Activated naive CD4-positive, alpha-beta T cell treated with anti-CD3 and anti-CD28 coated beads, Interleukin-2, amount 10 ng/mL, durations not matched to agents 7 days and 5 days (primary cell): ENCODE measurements at regions of chr6 and their contacts with region 1.

Region 1: GRCh38 chr6:43506667-43507471 is 3.3 kb downstream of the LRRC73 start:
- DNase-seq: peak; percentile 85
- H3K4me3 Mint-ChIP-seq: no peak overlapping the region
- H3K27ac Mint-ChIP-seq: no peak overlapping the region
- H3K4me1 Mint-ChIP-seq: peaks cover 13% of the 10 kb centered on the region
- H3K27me3 Mint-ChIP-seq: peaks cover 34% of the 10 kb centered on the region

Region 2: DNA sequence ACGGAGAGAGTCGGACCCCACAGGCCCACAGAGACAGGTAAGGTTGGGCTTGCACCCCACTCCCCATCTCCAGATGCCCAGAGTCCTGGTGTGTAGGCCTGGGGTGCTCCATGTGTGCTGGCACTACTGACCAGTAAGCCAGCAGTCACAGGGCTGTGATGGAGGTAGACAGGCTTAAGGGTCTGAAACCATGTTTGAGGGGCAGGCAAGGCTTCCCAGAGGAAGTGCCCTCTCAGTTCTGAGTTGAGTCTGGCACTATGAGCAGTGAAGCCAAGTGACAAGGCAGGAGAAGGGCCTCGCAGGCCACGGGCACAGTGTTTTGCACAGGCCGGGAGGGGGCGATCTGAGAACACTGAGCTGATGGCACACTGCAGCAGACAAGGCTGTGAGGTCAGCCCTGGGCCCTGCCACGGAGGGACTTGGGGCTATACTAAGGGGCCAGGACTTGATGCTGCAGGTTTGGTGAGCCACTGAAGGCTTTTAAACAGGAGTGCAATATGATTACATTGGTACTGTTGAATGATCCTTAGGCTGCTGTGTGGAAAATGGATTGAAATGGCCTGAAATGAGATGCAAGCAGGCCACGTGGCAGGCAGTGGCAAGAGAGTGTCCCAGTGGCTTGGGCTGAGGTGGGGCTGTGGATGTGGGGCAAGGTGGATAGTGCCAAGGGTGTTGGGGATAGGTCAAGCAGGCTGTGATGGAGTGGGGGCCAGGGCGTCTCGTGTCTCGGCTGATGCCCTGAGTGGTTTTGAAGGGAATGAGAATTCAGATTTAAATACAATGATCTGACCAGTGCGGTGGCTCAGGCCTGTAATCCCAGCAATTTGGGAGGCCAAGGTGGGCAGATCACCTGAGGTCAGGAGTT is 243.3 kb before region 1 on chr6:
- CTCF ChIA-PET with region 1: interaction called, 36 read pairs
- DNase-seq: peak; percentile 87
- H3K4me3 Mint-ChIP-seq: no peak overlapping the region
- H3K27ac Mint-ChIP-seq: no peak overlapping the region
- H3K4me1 Mint-ChIP-seq: no peaks in the 10 kb centered on the region
- H3K27me3 Mint-ChIP-seq: peaks cover 62% of the 10 kb centered on the region

Region 3: GRCh38 chr6:43454696-43455530 is 52.0 kb before region 1 on chr6:
- CTCF ChIA-PET with region 1: interaction called, 46 read pairs
- DNase-seq: peak; percentile 76
- H3K4me3 Mint-ChIP-seq: peak overlapping the region; percentile 77
- H3K27ac Mint-ChIP-seq: peak overlapping the region; percentile 28
- H3K4me1 Mint-ChIP-seq: peaks cover 15% of the 10 kb centered on the region
- H3K27me3 Mint-ChIP-seq: peaks cover 41% of the 10 kb centered on the region

Region 4: DNA sequence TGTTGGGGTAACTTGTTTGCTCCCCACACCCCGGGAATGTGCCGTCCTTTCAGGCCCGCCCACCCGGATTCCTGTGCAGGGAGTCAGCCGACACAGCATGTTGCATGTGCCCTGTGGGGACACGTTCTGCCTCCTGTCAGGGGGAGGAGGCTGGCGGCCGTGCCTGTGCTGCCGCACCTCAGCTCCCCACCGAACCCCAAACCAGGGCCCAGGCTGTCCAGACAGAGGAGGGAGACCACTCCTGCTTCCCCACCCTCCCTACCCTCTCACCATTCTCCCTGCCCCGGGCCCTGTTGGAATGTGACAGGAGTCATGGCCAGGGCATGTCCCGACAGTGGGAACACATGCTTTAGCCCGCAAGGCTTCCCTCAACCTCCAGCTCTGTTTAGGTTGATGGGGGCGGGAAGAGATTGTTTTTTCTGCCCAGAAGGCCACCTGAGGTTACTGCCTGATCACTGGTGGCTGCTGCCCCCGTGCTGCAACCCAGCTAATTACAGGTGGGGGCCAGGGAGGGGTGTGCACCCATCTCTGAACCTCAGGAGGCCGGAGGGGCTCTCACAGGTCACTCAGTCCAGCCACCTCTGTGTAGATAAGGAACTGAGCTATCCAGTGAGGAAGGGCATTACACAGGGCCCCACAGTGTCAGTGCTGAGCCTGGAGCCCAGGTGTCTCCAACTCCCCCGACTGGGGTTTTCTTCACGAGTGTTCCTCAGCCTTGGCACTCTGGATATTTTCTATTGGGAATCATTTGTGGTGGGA is 10.3 kb before region 1 on chr6:
- CTCF ChIA-PET with region 1: interaction called, 44 read pairs
- DNase-seq: peak; percentile 42
- H3K4me3 Mint-ChIP-seq: no peak overlapping the region
- H3K27ac Mint-ChIP-seq: no peak overlapping the region
- H3K4me1 Mint-ChIP-seq: peaks cover 21% of the 10 kb centered on the region
- H3K27me3 Mint-ChIP-seq: no peaks in the 10 kb centered on the region

Region 5: DNA sequence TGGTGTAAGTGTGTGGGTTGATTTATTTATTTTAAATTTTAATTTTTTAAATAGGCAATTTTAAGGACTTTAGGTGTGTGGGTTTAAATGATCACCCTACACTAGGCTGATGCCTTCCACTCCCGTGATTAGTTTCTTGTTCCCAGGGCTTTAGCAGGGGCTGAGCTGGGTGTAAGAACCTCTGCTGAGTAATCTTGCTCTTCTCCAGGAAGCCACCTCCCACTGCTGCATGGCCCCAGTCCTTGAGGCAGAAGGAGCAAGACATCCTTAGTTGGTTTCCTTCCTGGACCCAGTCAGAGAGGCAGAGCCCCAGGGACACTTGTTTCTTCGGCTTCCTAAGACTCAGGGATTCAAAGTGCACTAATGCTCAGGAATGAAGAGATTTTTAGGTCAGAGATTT is 860.8 kb after region 1 on chr6:
- CTCF ChIA-PET with region 1: no interaction called
- DNase-seq: no peak
- H3K4me3 Mint-ChIP-seq: no peak overlapping the region
- H3K27ac Mint-ChIP-seq: no peak overlapping the region
- H3K4me1 Mint-ChIP-seq: no peaks in the 10 kb centered on the region
- H3K27me3 Mint-ChIP-seq: peaks cover 25% of the 10 kb centered on the region